ENCODE measurements at regions of chr15 and their contacts with region 1.

Region 1: GRCh38 chr15:63048115-63048775 is 5.7 kb downstream of the TPM1 start:
- DNase-seq: peak; percentile 83
- H3K4me3 Mint-ChIP-seq: peak overlapping the region; percentile 86
- H3K27ac Mint-ChIP-seq: no peak overlapping the region
- H3K4me1 Mint-ChIP-seq: peaks cover 21% of the 10 kb centered on the region
- H3K27me3 Mint-ChIP-seq: peaks cover 56% of the 10 kb centered on the region

Region 2: DNA sequence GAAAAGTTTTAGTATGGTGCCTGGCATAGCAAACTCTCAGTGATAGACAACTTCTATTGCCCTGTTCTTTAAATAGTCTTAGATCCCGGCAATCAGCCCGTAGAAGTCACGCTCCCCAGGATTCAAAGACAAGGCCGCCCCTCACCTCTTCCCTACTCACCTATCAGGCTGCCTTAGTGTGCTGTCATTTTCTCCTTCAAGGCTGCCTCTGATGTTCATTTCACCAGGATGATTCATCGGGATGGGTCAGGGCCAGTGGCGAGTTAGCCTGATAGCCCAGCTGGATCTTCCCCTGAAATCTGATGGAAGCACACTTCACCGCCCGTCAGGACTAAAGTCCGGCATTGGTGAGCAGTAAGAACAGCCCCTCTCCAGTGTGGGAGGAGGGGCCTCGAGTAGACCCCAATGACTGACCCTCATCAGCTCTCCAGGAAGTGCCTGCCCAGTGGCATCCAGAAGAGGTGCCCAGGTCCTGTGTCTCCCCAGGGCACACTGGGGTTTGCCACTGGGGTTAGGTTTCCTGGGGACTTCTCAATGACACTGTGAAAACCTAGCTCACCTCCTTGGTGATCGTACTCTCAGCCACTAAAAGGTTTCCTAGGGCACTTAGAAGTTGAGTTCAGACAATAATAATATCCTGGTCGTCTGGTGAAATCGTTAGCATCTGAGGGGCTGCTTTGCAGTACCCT is 31.8 kb after region 1 on chr15:
- CTCF ChIA-PET with region 1: interaction called, 10 read pairs
- POLR2A ChIA-PET with region 1: no interaction called
- DNase-seq: no peak
- H3K4me3 Mint-ChIP-seq: no peak overlapping the region
- H3K27ac Mint-ChIP-seq: no peak overlapping the region
- H3K4me1 Mint-ChIP-seq: peaks cover 10% of the 10 kb centered on the region
- H3K27me3 Mint-ChIP-seq: peaks cover 8% of the 10 kb centered on the region

Region 3: DNA sequence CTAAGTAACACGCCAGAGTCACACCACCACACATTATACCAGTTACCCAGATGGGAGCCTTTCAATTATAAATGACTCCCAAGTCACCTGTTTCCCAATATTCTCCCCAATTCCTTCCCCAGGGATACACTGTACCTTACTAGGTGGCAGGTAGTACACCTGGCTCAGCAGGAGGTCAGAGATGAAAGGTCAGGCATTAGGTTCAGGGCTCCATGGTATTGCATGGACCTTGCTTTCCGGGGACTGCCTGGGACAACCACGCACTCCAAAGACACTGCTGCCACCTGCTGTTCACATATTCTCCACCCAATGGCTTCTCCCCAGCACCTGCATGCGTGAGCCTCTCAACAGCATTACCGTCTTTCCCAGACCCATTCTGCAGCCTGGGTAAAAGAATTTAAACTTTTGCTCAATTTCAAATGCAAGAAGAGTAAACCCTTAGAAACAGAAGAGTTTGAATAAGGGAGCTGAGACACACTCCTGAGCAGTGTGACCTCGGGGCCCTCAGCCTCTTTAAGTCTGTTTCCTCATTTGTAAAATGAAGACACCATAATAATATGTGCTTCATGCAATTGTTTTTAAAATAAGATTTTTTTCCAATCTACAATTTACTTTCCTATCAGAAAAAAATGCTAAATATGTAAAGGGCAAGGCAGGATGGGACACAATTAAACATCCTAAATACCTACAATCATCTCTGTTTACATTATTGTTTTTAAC is 45.4 kb after region 1 on chr15:
- CTCF ChIA-PET with region 1: interaction called, 16 read pairs
- POLR2A ChIA-PET with region 1: no interaction called
- DNase-seq: peak; percentile 78
- H3K4me3 Mint-ChIP-seq: no peak overlapping the region
- H3K27ac Mint-ChIP-seq: no peak overlapping the region
- H3K4me1 Mint-ChIP-seq: peaks cover 5% of the 10 kb centered on the region
- H3K27me3 Mint-ChIP-seq: peaks cover 2% of the 10 kb centered on the region

Region 4: DNA sequence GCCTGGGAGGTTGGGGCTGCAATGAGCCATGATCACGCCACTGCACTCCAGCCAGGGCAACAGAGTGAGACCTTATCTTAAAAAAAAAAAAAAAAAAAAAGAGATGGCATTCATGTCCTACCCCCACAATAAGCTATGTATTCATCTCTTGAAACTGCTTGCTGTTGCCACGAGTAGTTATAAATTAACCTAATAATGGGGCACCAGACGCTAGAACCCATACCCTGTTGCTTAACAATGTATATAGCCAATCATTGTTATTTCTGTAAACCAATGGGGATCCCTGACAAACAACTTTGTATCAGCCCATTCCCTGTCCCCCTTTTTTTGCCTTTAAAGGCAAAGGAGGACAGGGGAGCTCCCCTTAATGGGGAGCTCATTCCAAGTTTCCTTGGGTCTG is 70.6 kb after region 1 on chr15:
- CTCF ChIA-PET with region 1: interaction called, 12 read pairs
- POLR2A ChIA-PET with region 1: no interaction called
- DNase-seq: no peak
- H3K4me3 Mint-ChIP-seq: no peak overlapping the region
- H3K27ac Mint-ChIP-seq: no peak overlapping the region
- H3K4me1 Mint-ChIP-seq: peaks cover 15% of the 10 kb centered on the region
- H3K27me3 Mint-ChIP-seq: peaks cover 2% of the 10 kb centered on the region

Region 5: DNA sequence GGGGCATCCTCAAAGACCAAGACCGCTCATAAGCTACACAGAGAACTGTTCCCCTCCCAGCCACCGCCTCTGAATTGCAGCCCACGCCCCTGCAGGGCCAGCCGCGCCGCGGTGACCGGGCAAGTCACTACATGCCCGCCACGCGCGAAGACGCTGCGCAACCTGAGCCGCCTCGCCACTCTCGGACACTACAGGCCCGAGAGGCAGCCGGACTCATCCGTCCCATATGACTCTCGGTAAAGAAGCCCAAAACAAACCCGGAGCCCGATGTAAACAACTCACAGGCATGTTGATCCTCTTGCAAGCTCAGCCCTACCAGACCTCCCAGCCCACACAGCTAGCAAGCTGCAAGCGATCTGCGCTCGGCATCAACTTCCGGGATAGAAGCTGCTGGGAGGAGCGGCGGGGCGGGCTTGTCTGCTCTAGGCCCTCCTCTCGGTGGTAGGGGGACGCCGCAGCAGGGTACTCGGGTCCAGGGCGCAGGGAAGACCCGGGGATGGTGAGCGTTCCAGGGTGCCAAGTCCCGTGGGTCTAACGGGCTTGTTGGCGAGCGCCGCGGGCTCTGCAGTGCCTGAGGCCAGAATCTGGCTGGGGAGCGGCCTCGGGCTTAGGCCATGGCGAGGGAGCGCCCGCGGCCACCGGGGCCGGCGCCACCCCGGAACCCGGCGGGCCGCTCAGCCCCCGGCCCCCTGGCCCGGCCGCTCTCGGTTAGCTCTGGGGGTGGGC is 109.0 kb after region 1 on chr15 and contains the start of gene RPS27L:
- CTCF ChIA-PET with region 1: no interaction called
- POLR2A ChIA-PET with region 1: no interaction called
- DNase-seq: peak; percentile 94
- H3K4me3 Mint-ChIP-seq: peak within 1 kb of the TSS; percentile 95
- H3K27ac Mint-ChIP-seq: peak within 1 kb of the TSS; percentile 98
- H3K4me1 Mint-ChIP-seq: peaks cover 28% of the 10 kb centered on the region
- H3K27me3 Mint-ChIP-seq: no peaks in the 10 kb centered on the region
- total RNA-seq, gene RPS27L: 219 to 226 TPM

Measured in activated CD4-positive, alpha-beta T cell treated with anti-CD3 and anti-CD28 coated beads, Interleukin-2, amount 10 ng/mL, durations not matched to agents 7 days and 5 days (primary cell).